Mucosa of descending colon (tissue), 3 donors: ENCODE measurements at regions of chr12 and their contacts with region 1.

Region 1: DNA sequence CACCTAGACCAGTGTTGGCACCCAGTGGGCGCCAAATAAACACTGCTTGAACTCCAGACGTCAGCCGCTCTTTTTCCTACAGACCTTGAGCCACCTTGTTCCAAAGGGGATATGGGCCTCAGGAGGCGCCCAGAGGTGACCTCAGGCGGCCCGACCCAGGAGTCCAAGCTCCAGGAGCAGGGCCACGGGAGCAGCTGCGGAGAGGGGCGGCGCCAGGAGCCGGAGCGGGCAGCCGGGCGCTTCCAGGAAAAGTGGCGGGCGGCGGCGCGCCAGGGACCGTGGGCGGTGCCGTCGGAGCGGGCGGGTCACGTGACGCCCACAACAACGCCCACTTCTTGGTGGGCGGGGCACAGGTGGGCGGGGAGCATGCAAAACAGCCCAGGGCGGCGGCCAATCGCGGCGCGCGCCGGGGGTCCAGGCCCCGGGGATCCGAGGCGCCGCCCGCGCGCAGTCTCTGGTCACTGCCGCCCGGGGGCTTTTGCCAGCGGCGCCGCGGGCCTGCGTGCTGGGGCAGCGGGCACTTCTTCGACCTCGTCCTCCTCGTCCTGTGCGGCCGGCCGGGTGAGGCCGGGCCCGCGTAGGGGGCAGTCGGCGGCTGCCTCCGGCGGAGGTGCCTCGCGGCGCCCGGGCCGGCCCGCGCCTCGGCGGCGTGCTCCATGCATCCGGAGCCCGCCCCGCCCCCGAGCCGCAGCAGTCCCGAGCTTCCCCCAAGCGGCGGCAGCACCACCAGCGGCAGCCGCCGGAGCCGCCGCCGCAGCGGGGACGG is at the start of gene ORAI1:
- DNase-seq: peak; percentile 98 to 99 (median 99)
- ATAC-seq: peak; percentile 87
- H3K4me3 ChIP-seq: peak within 1 kb of the TSS; percentile 48
- H3K4me1 ChIP-seq: peaks cover 32% of the 10 kb centered on the region
- CTCF ChIP-seq: peak; percentile 24
- total RNA-seq, gene ORAI1: 8.2 to 17.6 (median 13.6) TPM

Region 2: DNA sequence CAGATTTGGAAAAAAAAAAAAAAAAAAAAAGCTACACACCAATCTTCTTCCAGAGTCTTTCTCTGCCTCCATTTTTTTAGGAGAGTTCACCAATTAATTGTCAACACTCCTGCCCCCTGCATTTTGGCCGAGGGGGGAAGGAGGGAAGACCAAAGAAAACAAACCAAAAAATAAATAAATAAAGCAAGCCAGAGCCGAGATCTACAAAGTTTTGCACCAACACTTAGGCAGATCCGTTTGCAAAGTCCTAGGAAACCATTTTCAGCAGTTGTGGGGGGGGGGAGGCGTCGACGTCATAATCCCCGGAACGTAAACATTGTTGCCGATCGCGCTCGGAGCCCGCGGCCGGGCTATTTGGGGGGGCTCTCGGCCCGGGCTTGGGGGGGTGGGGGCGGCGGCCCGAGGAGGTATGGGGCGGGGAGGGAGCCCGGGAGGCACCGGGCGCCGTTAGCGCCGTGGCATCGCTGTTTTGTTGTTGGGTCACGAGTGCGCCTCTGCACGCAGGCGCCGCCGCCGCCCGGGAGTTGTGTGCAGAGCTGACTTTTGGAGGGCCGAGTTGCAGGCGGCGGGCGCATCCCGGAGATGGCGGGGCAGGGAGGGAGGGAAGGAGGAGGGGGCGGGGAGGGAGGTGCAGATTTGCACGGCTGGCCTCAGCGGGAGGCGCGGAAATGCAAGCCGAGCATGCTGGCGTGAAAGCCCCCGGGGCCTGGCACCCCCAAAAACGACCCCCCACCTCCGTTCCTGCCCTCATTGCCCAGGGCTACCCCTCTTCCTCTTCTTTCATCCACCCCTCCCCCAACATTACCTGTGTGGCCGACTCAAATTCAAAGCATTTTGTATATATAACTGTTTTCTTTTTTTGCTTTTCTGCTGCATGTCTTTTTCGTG is 46.0 kb before region 1 on chr12:
- intact Hi-C with region 1: loop called in 1 of 2 experiments (anchors 10 kb)
- DNase-seq: peak; percentile 82 to 91 (median 87)
- ATAC-seq: peak; percentile 65
- H3K4me3 ChIP-seq: peak overlapping the region; percentile 32
- H3K4me1 ChIP-seq: peaks cover 8% of the 10 kb centered on the region
- CTCF ChIP-seq: no peak

Region 3: GRCh38 chr12:121697098-121697698 is 70.9 kb after region 1 on chr12:
- intact Hi-C with region 1: no loop called
- DNase-seq: peak in 1 of 3 donors; percentile 80
- ATAC-seq: no peak
- H3K4me3 ChIP-seq: no peak overlapping the region
- H3K4me1 ChIP-seq: no peaks in the 10 kb centered on the region
- CTCF ChIP-seq: peak; percentile 11

Region 4: DNA sequence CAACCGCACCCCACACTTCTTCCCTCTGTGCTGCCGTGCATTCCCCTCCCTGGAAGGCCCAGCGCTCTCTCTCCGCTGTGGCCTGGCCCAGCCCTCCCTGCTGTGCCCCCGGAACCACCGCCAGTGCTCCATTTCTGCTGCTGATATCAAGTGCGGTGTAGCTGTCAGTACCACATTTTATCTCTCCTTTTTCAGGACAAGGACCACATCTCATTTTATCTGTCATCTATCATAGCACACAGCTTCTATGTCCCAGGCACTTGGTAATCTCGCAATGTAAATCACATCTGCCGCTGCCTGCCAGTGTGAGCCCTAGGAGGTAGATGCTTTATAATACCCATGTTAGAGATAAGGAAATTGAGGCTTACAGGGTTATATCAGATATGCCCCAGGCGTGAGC is 529.4 kb after region 1 on chr12:
- intact Hi-C with region 1: no loop called
- DNase-seq: no peak
- ATAC-seq: no peak
- H3K4me3 ChIP-seq: no peak overlapping the region
- H3K4me1 ChIP-seq: no peaks in the 10 kb centered on the region
- CTCF ChIP-seq: no peak